ENCODE measurements at regions of chr3 and their contacts with region 1.

Region 1: GRCh38 chr3:100400780-100401673 is at the starts of genes LNP1 and TOMM70:
- DNase-seq: peak; percentile 94 to 97 (median 95)
- H3K4me3 ChIP-seq: peak within 1 kb of the TSS; percentile 83 to 98
- H3K4me3 Mint-ChIP-seq: peak within 1 kb of the TSS; percentile 96 to 99 (median 97)
- H3K27ac ChIP-seq: peak within 1 kb of the TSS; percentile 85
- H3K27ac Mint-ChIP-seq: peak within 1 kb of the TSS; percentile 95 to 99 (median 97)
- H3K4me1 ChIP-seq: peaks cover 52% of the 10 kb centered on the region
- H3K4me1 Mint-ChIP-seq: peaks cover 36 to 73% (median 57%) of the 10 kb centered on the region in 4 donors
- H3K27me3 ChIP-seq: no peaks in the 10 kb centered on the region
- H3K27me3 Mint-ChIP-seq: no peaks in the 10 kb centered on the region
- total RNA-seq, gene LNP1: 1.8 to 2.2 TPM
- total RNA-seq, gene TOMM70: 34.7 to 37.5 TPM

Region 2: DNA sequence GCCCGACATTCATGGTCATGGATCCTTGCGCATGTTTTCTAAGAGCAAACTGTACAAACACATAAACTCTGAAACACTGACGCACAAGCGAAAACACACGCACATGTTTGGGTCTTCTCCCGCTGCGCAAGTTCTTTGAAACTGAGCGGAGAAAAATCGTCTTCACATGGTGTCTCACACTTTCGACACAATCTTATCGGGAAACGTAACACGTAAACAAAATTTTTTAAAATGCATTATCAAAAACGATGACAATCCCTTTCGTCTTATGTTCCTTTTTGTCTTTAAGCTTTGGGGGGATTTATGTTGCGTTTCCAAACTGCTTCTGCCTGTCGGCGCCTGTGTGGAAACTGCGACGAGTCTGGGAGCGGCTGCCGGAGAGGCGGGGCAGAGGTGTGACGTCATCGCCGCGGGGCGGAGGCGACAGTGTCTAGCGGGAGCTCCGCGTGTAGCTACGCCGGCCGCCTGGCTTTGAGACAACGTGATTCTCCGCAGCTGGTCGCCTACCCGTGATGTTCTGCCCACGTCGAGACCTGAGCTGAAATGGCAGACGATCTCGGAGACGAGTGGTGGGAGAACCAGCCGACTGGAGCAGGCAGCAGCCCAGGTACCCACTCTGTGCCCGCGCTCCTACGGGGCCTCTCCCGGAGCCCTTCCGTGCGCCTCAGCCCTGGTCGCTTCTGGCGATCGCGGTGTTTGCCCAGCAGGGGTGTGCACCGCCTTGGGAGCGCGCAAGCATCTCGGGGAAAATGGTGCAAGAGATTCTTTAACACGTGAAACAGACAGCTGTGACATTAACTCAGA is 583.4 kb before region 1 on chr3 and contains the start of gene CMSS1:
- CTCF ChIA-PET with region 1: interaction called, 4 read pairs
- POLR2A ChIA-PET with region 1: no interaction called
- intact Hi-C with region 1: loop called (anchors 2 kb)
- DNase-seq: peak; percentile 96 to 98 (median 96)
- H3K4me3 ChIP-seq: peak within 1 kb of the TSS; percentile 59 to 73
- H3K4me3 Mint-ChIP-seq: peak within 1 kb of the TSS; percentile 93 to 98 (median 96)
- H3K27ac ChIP-seq: peak within 1 kb of the TSS; percentile 80
- H3K27ac Mint-ChIP-seq: peak within 1 kb of the TSS; percentile 99 to 100 (median 100)
- H3K4me1 ChIP-seq: peaks cover 20% of the 10 kb centered on the region
- H3K4me1 Mint-ChIP-seq: peaks cover 25 to 40% (median 34%) of the 10 kb centered on the region in 4 donors
- H3K27me3 ChIP-seq: no peaks in the 10 kb centered on the region
- H3K27me3 Mint-ChIP-seq: no peaks in the 10 kb centered on the region
- total RNA-seq, gene CMSS1: 18.3 to 20.5 TPM

Region 3: GRCh38 chr3:100260685-100261484 is 140.1 kb before region 1 on chr3 and contains the start of gene TBC1D23:
- CTCF ChIA-PET with region 1: interaction called, 6 read pairs
- POLR2A ChIA-PET with region 1: interaction called, 23 read pairs
- intact Hi-C with region 1: loop called (anchors 1 kb)
- DNase-seq: peak; percentile 95 to 99 (median 98)
- H3K4me3 ChIP-seq: peak within 1 kb of the TSS; percentile 87 to 93
- H3K4me3 Mint-ChIP-seq: peak within 1 kb of the TSS; percentile 92 to 97 (median 94)
- H3K27ac ChIP-seq: peak within 1 kb of the TSS; percentile 93
- H3K27ac Mint-ChIP-seq: peak within 1 kb of the TSS; percentile 90 to 100 (median 99)
- H3K4me1 ChIP-seq: peaks cover 40% of the 10 kb centered on the region
- H3K4me1 Mint-ChIP-seq: peaks cover 40 to 63% (median 51%) of the 10 kb centered on the region in 4 donors
- H3K27me3 ChIP-seq: no peaks in the 10 kb centered on the region
- H3K27me3 Mint-ChIP-seq: no peaks in the 10 kb centered on the region
- total RNA-seq, gene TBC1D23: 43.3 to 44.9 TPM

Region 4: DNA sequence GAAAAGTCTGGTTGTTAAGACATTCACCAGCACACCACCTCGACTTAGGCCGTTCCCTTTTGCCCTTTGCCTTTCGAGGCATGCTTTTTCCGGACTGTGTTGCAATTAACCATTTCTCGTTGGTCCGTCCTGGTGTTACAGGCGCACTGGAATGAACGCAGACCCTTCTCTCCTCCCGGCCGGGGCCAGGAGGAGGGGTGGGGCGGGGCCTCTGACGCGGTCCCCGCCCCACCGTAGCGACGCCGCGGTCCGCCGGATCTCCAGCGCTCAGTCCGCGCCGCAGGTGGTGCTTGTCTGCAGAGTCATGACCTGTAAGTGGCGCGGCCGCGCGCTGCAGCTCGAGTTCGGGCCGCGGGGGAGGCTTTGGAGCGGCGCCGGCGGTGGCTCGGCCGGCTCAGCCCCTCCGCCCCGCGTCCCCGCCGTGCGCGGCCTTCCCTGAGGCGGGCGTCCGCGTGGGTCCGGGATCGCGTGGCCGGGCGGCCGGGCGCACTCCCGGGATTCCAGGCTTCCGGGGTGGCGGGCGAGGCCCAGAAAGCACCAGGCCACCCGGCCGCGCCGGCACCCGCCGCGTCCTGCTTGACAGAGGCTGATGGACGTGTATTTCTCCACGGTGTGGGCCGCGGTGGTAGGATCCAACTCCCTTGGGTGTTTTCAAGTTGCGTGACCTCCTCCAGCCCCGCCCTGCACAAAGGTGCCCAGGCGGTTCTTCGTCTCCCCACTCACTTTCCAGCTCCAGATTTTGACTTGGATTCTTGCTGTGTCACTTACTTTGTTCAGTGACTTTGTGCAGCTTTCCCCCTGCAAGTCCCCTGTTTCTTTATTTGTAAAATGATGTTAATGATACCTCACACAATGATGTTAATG is 66.3 kb before region 1 on chr3 and contains the start of gene NIT2:
- CTCF ChIA-PET with region 1: interaction called, 3 read pairs
- POLR2A ChIA-PET with region 1: interaction called, 20 read pairs
- intact Hi-C with region 1: loop called (anchors 1 kb)
- DNase-seq: peak; percentile 74 to 80 (median 75)
- H3K4me3 ChIP-seq: peak within 1 kb of the TSS; percentile 54 to 71
- H3K4me3 Mint-ChIP-seq: peak within 1 kb of the TSS; percentile 89 to 96 (median 96)
- H3K27ac ChIP-seq: peak within 1 kb of the TSS; percentile 67
- H3K27ac Mint-ChIP-seq: peak within 1 kb of the TSS; percentile 83 to 97 (median 95)
- H3K4me1 ChIP-seq: peaks cover 14% of the 10 kb centered on the region
- H3K4me1 Mint-ChIP-seq: peaks cover 16 to 40% (median 18%) of the 10 kb centered on the region in 4 donors
- H3K27me3 ChIP-seq: no peaks in the 10 kb centered on the region
- H3K27me3 Mint-ChIP-seq: no peaks in the 10 kb centered on the region
- total RNA-seq, gene NIT2: 30.5 to 32.6 TPM

Region 5: GRCh38 chr3:100370756-100371155 is 30.3 kb before region 1 on chr3:
- CTCF ChIA-PET with region 1: no interaction called
- POLR2A ChIA-PET with region 1: interaction called, 6 read pairs
- intact Hi-C with region 1: loop called (anchors 1 kb)
- DNase-seq: no peak
- H3K4me3 ChIP-seq: no peak overlapping the region
- H3K4me3 Mint-ChIP-seq: no peak overlapping the region
- H3K27ac ChIP-seq: no peak overlapping the region
- H3K27ac Mint-ChIP-seq: no peak overlapping the region
- H3K4me1 ChIP-seq: no peaks in the 10 kb centered on the region
- H3K4me1 Mint-ChIP-seq: peaks cover 0 to 2% (median 0%) of the 10 kb centered on the region in 4 donors
- H3K27me3 ChIP-seq: no peaks in the 10 kb centered on the region
- H3K27me3 Mint-ChIP-seq: no peaks in the 10 kb centered on the region

Region 6: DNA sequence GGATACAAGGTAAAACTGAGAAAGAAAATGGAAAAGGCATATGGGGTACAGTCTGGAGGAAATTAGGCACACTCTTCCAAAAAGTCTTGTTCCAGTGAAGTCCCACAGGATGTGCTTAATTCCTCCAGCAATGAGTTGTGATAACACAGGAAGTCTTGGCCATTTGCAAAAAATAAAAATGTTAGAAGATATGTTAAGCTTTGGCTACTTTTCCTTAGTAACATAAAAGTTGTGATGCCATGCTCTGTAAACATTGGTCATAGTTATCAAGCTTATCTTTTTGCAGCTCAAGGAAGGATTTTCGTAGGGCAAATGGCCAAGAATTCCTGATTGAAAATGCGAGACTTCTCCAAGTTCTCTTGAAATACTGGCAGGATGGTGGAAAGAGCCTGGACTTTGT is 26.7 kb after region 1 on chr3:
- CTCF ChIA-PET with region 1: no interaction called
- POLR2A ChIA-PET with region 1: no interaction called
- intact Hi-C with region 1: no loop called
- DNase-seq: no peak
- H3K4me3 ChIP-seq: no peak overlapping the region
- H3K4me3 Mint-ChIP-seq: no peak overlapping the region
- H3K27ac ChIP-seq: no peak overlapping the region
- H3K27ac Mint-ChIP-seq: no peak overlapping the region
- H3K4me1 ChIP-seq: no peaks in the 10 kb centered on the region
- H3K4me1 Mint-ChIP-seq: no peaks in the 10 kb centered on the region
- H3K27me3 ChIP-seq: peaks cover 5% of the 10 kb centered on the region
- H3K27me3 Mint-ChIP-seq: peaks cover 6 to 8% of the 10 kb centered on the region in 2 donors

Region 7: DNA sequence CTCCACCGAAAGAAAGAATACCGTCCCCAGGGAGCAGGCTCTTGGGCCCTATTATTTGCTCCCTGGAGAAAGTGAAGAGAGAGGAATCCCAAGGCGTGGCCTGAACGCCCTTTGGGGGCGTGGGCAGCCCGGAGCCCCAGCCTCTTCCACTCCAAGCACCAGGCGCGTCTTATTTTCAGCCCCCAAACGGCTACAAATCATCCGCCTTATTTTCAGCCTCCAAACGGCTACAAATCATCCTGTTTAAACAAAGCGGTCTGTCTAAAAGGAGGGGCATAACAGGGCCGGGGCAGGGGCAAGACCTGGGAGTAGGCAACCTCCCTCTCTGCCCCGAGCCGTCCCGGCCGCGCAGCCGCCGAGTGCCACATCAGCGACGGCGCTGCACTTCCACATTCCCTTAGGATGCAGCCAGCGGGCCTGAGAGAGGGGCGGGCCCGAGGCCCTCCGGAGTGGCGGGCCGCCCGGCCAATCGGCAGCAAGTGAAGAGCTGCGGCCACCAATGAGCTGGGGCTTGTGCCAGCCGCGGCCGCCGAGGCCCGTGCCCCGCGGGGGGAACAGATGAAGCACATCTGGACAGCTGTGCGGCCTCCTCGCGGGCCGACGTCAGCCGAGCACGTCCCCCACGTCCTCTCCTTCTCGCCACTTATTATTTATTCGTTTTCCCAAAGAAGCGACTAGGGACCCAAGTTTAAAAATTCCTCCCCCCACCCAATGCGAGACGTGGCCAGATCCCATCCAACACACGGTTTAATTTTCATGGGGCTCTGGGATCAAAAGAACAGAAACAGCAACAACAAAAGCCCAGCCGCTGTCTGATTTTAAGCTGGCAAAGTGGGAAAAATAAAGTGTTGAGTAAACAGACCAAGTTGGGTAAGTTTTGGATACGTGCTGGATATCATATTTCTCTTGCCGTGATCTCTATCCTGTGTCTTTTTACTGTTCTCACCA is 91.3 kb after region 1 on chr3 and contains the start of gene TMEM45A:
- CTCF ChIA-PET with region 1: interaction called, 3 read pairs
- POLR2A ChIA-PET with region 1: interaction called, 5 read pairs
- intact Hi-C with region 1: loop called (anchors 2 kb)
- DNase-seq: peak; percentile 53 to 79 (median 72)
- H3K4me3 ChIP-seq: peak within 1 kb of the TSS; percentile 42 to 49
- H3K4me3 Mint-ChIP-seq: peak within 1 kb of the TSS; percentile 69 to 89 (median 86)
- H3K27ac ChIP-seq: peak within 1 kb of the TSS; percentile 26
- H3K27ac Mint-ChIP-seq: peak within 1 kb of the TSS in 6 of 7 donors; percentile 11 to 65 (median 36)
- H3K4me1 ChIP-seq: peaks cover 12% of the 10 kb centered on the region
- H3K4me1 Mint-ChIP-seq: peaks cover 5 to 15% (median 8%) of the 10 kb centered on the region in 4 donors
- H3K27me3 ChIP-seq: no peaks in the 10 kb centered on the region
- H3K27me3 Mint-ChIP-seq: peaks cover 5 to 8% of the 10 kb centered on the region in 2 donors
- total RNA-seq, gene TMEM45A: 0.23 TPM in 1 of 2 experiments, not detected in the other

Region 8: DNA sequence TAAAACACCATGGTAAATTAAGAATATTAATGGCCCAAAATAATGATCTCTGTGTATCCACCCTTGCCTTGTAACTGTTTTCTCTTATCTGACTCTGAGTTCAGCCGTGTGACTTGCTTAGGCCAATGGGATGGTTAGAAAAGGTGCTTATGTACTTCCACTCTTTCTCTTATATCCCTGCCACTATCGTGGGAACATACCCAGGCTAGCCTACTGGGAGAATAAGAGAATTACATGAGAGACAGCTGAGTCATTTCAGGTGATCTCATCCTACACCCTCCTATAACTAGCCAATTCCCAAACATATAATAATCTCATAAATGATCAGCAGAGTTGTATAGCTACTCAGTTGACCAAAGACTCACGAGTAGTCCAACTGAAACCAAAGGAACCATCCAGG is 690.5 kb after region 1 on chr3:
- CTCF ChIA-PET with region 1: no interaction called
- POLR2A ChIA-PET with region 1: no interaction called
- intact Hi-C with region 1: no loop called
- DNase-seq: no peak
- H3K4me3 ChIP-seq: no peak overlapping the region
- H3K4me3 Mint-ChIP-seq: no peak overlapping the region
- H3K27ac ChIP-seq: no peak overlapping the region
- H3K27ac Mint-ChIP-seq: no peak overlapping the region
- H3K4me1 ChIP-seq: no peaks in the 10 kb centered on the region
- H3K4me1 Mint-ChIP-seq: no peaks in the 10 kb centered on the region
- H3K27me3 ChIP-seq: no peaks in the 10 kb centered on the region
- H3K27me3 Mint-ChIP-seq: peaks cover 3 to 9% of the 10 kb centered on the region in 2 donors

Region 9: GRCh38 chr3:101676765-101677435 is 1275.9 kb after region 1 on chr3 and contains the start of gene ZBTB11:
- CTCF ChIA-PET with region 1: no interaction called
- POLR2A ChIA-PET with region 1: interaction called, 12 read pairs
- intact Hi-C with region 1: loop called (anchors 2 kb)
- DNase-seq: peak; percentile 99 to 100 (median 99)
- H3K4me3 ChIP-seq: peak within 1 kb of the TSS; percentile 78 to 94
- H3K4me3 Mint-ChIP-seq: peak within 1 kb of the TSS; percentile 92 to 99 (median 96)
- H3K27ac ChIP-seq: peak within 1 kb of the TSS; percentile 98
- H3K27ac Mint-ChIP-seq: peak within 1 kb of the TSS; percentile 97 to 99 (median 98)
- H3K4me1 ChIP-seq: peaks cover 44% of the 10 kb centered on the region
- H3K4me1 Mint-ChIP-seq: peaks cover 23 to 73% (median 41%) of the 10 kb centered on the region in 4 donors
- H3K27me3 ChIP-seq: no peaks in the 10 kb centered on the region
- H3K27me3 Mint-ChIP-seq: peaks cover 0 to 2% of the 10 kb centered on the region in 2 donors
- total RNA-seq, gene ZBTB11: 48.9 to 50.8 TPM

Measured in CD4-positive, alpha-beta memory T cell (primary cell).